ENCODE measurements at regions of chr3 and their contacts with region 1.

Region 1: DNA sequence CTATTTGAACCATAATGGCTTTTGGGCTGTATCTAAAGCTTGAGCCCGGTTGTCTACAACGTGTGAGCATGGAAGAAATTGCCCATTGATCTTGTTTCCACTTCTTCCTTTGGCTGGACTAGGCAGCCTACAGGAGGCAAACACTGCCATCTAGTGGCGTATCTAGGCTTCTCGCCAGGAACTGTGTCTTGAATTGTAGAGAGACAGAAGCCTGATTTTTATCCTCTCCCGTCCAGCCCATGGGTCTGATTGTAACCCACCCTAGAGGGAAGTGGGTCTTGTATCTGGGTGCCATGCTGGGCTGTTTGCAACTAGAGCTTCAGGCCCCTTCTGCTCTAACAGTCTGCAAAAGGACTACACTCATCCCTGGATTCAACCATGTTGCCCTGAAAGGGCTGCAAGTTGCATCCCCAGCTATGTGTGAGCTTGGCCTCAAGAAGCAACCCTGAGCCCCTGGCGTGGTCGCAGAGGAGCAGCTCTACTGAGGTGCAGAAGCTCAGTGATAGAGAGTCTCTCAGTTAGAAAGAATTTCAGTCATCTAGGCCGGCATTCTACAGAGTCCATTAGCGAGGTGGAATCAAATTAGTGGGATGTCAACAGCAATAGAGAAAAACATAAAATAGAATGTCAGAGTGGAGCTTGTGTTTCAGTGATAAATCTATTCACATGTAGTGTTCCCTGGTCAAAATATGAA is 170.2 kb upstream of the UMPS start:
- DNase-seq: peak; percentile 78
- H3K4me3 ChIP-seq: no peak overlapping the region
- H3K27ac ChIP-seq: no peak overlapping the region
- H3K4me1 ChIP-seq: peaks cover 29% of the 10 kb centered on the region
- H3K27me3 ChIP-seq: peaks cover 0 to 10% of the 10 kb centered on the region in 2 experiments
- CTCF ChIP-seq: peak; percentile 81 to 89
- POLR2A ChIP-seq: no peak

Region 2: GRCh38 chr3:124014366-124014942 is 545.6 kb before region 1 on chr3:
- CTCF ChIA-PET with region 1: interaction called, 5 read pairs
- POLR2A ChIA-PET with region 1: no interaction called
- dilution Hi-C with region 1: no loop called
- intact Hi-C with region 1: loop called (anchors 2 kb)
- DNase-seq: peak; percentile 23
- H3K4me3 ChIP-seq: no peak overlapping the region
- H3K27ac ChIP-seq: no peak overlapping the region
- H3K4me1 ChIP-seq: peaks cover 7% of the 10 kb centered on the region
- H3K27me3 ChIP-seq: peaks cover 0 to 5% of the 10 kb centered on the region in 2 experiments
- CTCF ChIP-seq: no peak
- POLR2A ChIP-seq: no peak

Region 3: GRCh38 chr3:124281453-124282316 is 278.3 kb before region 1 on chr3:
- CTCF ChIA-PET with region 1: no interaction called
- POLR2A ChIA-PET with region 1: no interaction called
- dilution Hi-C with region 1: no loop called
- intact Hi-C with region 1: no loop called
- DNase-seq: peak; percentile 54
- H3K4me3 ChIP-seq: no peak overlapping the region
- H3K27ac ChIP-seq: no peak overlapping the region
- H3K4me1 ChIP-seq: peaks cover 10% of the 10 kb centered on the region
- H3K27me3 ChIP-seq: peaks cover 0 to 2% of the 10 kb centered on the region in 2 experiments
- CTCF ChIP-seq: peak; percentile 46 to 55
- POLR2A ChIP-seq: no peak

Region 4: GRCh38 chr3:124351430-124352148 is 208.4 kb before region 1 on chr3:
- CTCF ChIA-PET with region 1: interaction called, 46 read pairs
- POLR2A ChIA-PET with region 1: no interaction called
- dilution Hi-C with region 1: no loop called
- intact Hi-C with region 1: loop called (anchors 1 kb)
- DNase-seq: peak; percentile 61
- H3K4me3 ChIP-seq: no peak overlapping the region
- H3K27ac ChIP-seq: no peak overlapping the region
- H3K4me1 ChIP-seq: no peaks in the 10 kb centered on the region
- H3K27me3 ChIP-seq: peaks cover 0 to 2% of the 10 kb centered on the region in 2 experiments
- CTCF ChIP-seq: peak; percentile 38 to 54
- POLR2A ChIP-seq: no peak

Region 5: DNA sequence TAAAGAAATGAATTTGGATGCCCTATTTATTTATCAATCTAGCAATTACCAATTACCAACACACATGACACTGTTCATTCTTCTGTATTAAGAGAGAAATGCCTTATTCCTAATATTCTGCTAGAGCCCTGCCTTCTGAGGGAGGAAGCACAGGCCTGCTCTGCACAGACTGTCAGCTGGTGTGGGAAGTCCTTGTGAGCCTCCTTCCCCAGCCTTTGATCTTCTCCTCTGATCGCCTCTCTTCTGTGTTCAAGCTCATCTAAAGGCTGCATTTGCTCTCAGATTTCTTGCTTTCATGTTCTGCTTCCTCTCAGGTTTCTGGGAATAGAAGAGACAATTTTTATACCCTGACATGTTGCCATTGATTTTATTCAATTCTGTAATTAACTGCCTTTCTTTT is 120.4 kb before region 1 on chr3:
- CTCF ChIA-PET with region 1: no interaction called
- POLR2A ChIA-PET with region 1: no interaction called
- dilution Hi-C with region 1: no loop called
- intact Hi-C with region 1: no loop called
- DNase-seq: no peak
- H3K4me3 ChIP-seq: no peak overlapping the region
- H3K27ac ChIP-seq: no peak overlapping the region
- H3K4me1 ChIP-seq: no peaks in the 10 kb centered on the region
- H3K27me3 ChIP-seq: no peaks in the 10 kb centered on the region
- CTCF ChIP-seq: no peak
- POLR2A ChIP-seq: no peak

Region 6: DNA sequence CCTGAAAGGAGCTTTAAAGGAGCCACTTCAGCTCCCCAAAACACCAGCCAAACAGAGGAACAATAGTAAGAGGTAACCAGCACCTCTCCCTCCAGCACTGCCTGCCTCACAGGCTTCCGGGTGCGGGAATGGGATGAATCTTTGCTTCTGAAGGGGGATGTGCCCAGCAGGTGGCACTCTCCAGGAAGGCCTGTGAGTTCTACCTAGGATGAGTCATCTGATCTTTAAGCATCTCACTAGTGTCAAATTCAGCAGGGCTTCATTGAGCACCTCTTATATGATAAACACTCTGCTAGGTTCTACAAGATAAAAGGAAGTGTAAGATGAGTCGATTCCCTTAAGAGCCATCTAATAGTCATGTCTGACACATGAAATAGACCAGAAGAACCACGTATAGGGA is 67.2 kb before region 1 on chr3:
- CTCF ChIA-PET with region 1: interaction called, 6 read pairs
- POLR2A ChIA-PET with region 1: no interaction called
- dilution Hi-C with region 1: no loop called
- intact Hi-C with region 1: loop called (anchors 1 kb)
- DNase-seq: peak; percentile 35
- H3K4me3 ChIP-seq: no peak overlapping the region
- H3K27ac ChIP-seq: no peak overlapping the region
- H3K4me1 ChIP-seq: no peaks in the 10 kb centered on the region
- H3K27me3 ChIP-seq: no peaks in the 10 kb centered on the region
- CTCF ChIP-seq: peak; percentile 12 to 36
- POLR2A ChIP-seq: no peak

Region 7: DNA sequence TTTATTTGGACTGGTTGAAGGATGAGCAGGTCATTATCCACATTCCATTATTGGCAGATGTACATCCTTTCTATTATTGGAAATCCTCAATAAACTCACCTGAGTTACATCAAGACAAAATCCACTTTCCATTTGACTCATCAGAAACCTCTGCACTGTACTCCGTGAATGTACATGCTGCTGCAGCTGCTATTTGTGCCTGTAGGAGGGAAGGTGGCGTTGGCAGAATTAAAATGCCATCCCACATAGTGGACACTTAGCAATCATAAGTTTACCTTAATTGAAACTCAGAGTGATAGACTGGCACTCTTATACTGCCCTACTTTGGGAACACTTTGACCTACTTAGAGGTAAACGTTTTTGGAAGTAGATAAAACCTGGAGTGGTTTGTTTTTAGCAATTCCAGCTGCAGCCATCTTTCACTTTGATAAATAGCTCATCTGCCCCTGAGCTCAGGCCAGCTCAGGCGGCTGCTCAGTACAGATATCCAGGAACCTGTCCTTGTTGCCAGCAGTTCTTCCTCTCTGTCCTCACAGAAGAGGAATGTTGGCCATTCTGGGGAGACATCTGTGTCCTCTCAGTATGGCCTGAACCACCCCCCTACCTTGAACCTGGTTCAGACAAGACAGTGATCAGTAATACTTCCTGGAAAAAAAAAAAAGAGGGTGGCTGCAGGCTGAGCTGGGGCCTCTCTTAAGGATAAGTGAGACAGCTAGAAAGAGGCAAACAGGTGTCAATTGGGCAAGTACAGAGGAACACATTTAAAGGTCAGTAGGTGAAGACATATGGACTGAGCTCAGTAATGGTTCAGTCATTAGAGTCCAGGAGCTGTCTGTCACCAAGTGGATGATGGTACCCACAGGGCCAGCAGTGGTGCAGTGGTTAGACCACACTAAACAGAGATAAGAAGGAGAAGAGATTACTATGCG is 16.8 kb after region 1 on chr3:
- CTCF ChIA-PET with region 1: interaction called, 14 read pairs
- POLR2A ChIA-PET with region 1: no interaction called
- dilution Hi-C with region 1: no loop called
- intact Hi-C with region 1: no loop called
- DNase-seq: no peak
- H3K4me3 ChIP-seq: no peak overlapping the region
- H3K27ac ChIP-seq: no peak overlapping the region
- H3K4me1 ChIP-seq: no peaks in the 10 kb centered on the region
- H3K27me3 ChIP-seq: no peaks in the 10 kb centered on the region
- CTCF ChIP-seq: no peak
- POLR2A ChIP-seq: no peak

Region 8: DNA sequence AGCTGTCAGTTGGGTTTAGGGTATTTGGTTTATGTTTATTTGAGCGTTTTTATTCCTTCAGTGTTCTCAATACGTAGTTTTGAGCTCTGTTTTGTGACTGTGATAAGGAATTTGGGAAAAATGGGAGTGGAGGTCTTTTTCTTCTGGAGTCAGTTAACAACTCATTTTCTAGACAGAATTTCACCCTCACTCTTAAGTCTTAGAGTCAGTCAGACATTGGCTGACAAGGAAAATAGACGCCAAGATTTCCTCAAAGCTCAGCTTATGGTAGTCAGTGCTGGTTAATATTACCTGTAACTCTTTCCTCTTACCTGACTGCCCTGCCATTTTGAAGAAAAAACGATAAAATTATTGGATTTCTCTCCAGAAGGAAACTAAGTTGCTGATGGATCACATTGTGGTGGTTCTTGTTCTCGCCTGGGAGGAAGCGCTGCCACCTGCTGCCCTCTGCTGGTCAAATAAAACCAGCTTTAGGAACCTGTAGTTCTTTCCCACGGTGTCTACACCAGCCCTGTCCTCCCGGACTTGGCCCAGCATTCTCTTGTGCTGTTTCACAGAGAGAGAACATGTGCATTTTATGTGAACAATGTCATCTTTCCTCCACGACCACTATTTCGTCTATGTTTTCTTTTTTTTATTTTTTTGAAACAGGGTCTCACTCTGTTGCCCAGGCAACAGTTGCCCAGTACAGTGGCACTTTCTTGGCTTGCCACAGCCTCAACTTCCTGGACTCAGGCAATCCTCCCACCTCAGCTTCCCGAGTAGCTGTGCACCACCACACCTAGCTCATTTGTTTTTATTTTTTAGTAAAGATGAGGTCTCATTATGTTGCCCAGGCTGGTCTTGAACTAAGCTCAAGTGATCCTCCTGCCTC is 128.8 kb after region 1 on chr3:
- CTCF ChIA-PET with region 1: interaction called, 301 read pairs
- POLR2A ChIA-PET with region 1: interaction called, 3 read pairs
- dilution Hi-C with region 1: no loop called
- intact Hi-C with region 1: loop called (anchors 1 kb)
- DNase-seq: peak; percentile 82
- H3K4me3 ChIP-seq: no peak overlapping the region
- H3K27ac ChIP-seq: no peak overlapping the region
- H3K4me1 ChIP-seq: no peaks in the 10 kb centered on the region
- H3K27me3 ChIP-seq: peaks cover 7 to 13% of the 10 kb centered on the region in 2 experiments
- CTCF ChIP-seq: peak; percentile 80 to 81
- POLR2A ChIP-seq: no peak

Region 9: DNA sequence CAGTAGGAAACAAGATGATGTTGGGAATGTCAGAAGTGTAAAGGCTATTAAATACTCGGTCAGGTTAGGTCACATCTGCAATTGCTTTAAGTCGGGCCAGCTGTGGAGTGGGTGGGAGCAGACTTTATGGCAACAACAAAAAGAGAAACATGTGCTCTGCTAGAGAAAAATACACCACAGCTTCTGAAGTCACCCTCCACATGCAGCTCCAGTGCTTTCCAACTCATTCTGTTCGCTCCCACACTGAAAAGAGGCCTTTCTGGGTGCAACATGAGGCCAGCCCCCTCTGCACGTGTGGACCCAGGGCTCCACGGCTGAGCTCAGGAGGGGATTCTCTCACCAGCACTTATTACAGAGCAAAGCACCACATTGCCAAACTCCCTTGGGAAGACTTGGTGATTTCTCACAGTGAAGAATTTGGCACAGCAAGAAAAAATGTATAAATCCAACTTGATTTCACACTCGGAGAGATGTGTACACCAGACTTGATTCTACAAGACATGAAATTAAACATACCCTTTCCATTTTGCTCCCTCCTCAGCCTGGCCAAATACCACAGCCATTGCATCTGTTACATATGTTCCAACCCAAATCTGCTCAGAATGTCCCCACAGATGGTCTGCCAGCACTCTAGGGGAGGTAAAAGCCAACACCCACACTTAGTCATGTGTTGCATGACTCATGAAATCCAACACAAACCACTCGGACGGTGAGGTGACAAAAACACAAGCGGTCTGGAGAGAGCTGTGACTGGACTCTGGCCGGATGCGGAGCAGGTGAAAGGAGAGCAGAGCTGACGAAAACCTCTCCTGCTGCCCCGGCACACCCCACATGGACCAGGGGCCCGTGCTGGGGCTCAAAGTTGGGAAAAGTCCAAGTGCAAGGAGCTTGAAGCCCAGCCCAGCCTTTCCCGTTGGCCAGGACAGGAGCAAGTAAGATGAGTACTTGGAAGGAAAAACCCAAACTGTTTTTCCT is 252.6 kb after region 1 on chr3:
- CTCF ChIA-PET with region 1: no interaction called
- POLR2A ChIA-PET with region 1: no interaction called
- dilution Hi-C with region 1: no loop called
- intact Hi-C with region 1: no loop called
- DNase-seq: peak; percentile 9
- H3K4me3 ChIP-seq: no peak overlapping the region
- H3K27ac ChIP-seq: no peak overlapping the region
- H3K4me1 ChIP-seq: peaks cover 2% of the 10 kb centered on the region
- H3K27me3 ChIP-seq: no peaks in the 10 kb centered on the region
- CTCF ChIP-seq: no peak
- POLR2A ChIP-seq: no peak

Region 10: GRCh38 chr3:125594581-125595011 is 1034.6 kb after region 1 on chr3:
- CTCF ChIA-PET with region 1: no interaction called
- POLR2A ChIA-PET with region 1: interaction called, 3 read pairs
- dilution Hi-C with region 1: no loop called
- intact Hi-C with region 1: loop called (anchors 5 kb)
- DNase-seq: no peak
- H3K4me3 ChIP-seq: peak overlapping the region; percentile 51 to 89 (median 58)
- H3K27ac ChIP-seq: peak overlapping the region; percentile 32
- H3K4me1 ChIP-seq: peaks cover 22% of the 10 kb centered on the region
- H3K27me3 ChIP-seq: no peaks in the 10 kb centered on the region
- CTCF ChIP-seq: no peak
- POLR2A ChIP-seq: no peak

Measured in endothelial cell of umbilical vein (primary cell).